ENCODE measurements at regions of chr11 and their contacts with region 1.

Region 1: GRCh38 chr11:18526521-18527296 is at the start of gene TSG101:
- DNase-seq: peak; percentile 96 to 97
- ATAC-seq: peak; percentile 98 to 99 (median 98)
- H3K4me3 ChIP-seq: peak within 1 kb of the TSS; percentile 96
- H3K27ac ChIP-seq: peak within 1 kb of the TSS; percentile 99
- H3K4me1 ChIP-seq: peaks cover 27% of the 10 kb centered on the region
- H3K27me3 ChIP-seq: no peaks in the 10 kb centered on the region
- CTCF ChIP-seq: no peak
- total RNA-seq, gene TSG101: 66.5 to 105 (median 76.6) TPM

Region 2: GRCh38 chr11:16839821-16840220 is 1686.9 kb before region 1 on chr11:
- intact Hi-C with region 1: loop called in 1 of 2 experiments (anchors 5 kb)
- DNase-seq: no peak
- ATAC-seq: no peak
- H3K4me3 ChIP-seq: no peak overlapping the region
- H3K27ac ChIP-seq: no peak overlapping the region
- H3K4me1 ChIP-seq: no peaks in the 10 kb centered on the region
- H3K27me3 ChIP-seq: no peaks in the 10 kb centered on the region
- CTCF ChIP-seq: no peak

Region 3: DNA sequence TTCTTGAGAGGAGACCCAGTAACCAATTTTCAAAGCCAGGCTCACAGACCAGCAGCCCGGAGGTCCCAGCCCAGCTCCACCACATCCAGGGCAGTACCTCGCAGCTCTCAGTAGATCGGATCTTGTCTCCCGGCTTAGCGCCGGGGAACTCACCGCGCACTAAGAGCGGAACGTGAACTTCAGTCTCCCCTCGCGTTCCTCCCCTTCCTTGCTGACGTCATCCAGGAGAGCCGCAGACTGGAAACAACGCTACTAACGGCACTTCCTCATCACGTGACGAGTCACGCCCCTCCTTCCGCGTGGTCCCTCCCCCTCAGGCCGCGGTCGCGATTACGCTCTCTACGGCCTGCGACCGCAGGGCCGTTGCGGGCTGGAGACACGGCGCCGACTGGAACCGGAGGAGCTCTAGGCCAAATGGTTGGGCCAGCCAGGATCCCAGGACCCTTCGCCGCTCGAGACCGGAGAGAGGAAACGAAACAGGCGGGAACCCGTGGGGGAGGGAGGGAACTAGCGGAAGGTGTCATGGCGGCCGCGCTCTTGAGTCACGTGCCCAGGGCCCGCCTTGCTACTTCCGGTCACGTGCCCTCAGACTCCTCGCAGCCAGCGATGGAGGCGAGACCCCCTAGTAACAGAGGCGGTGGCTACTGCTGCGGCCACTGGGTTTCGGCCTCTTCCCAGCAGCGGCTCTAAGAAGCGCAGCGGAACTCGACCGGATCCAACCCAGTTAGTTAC is 204.6 kb before region 1 on chr11 and contains the starts of genes GTF2H1 and HPS5:
- intact Hi-C with region 1: loop called in 1 of 2 experiments (anchors 10 kb)
- DNase-seq: peak; percentile 94 to 97
- ATAC-seq: peak; percentile 98 to 99 (median 99)
- H3K4me3 ChIP-seq: peak within 1 kb of the TSS; percentile 83
- H3K27ac ChIP-seq: peak within 1 kb of the TSS; percentile 95
- H3K4me1 ChIP-seq: peaks cover 34% of the 10 kb centered on the region
- H3K27me3 ChIP-seq: no peaks in the 10 kb centered on the region
- CTCF ChIP-seq: no peak
- total RNA-seq, gene GTF2H1: 14.5 to 25.2 (median 19.4) TPM
- total RNA-seq, gene HPS5: 7.0 to 11.9 (median 8.8) TPM

Region 4: DNA sequence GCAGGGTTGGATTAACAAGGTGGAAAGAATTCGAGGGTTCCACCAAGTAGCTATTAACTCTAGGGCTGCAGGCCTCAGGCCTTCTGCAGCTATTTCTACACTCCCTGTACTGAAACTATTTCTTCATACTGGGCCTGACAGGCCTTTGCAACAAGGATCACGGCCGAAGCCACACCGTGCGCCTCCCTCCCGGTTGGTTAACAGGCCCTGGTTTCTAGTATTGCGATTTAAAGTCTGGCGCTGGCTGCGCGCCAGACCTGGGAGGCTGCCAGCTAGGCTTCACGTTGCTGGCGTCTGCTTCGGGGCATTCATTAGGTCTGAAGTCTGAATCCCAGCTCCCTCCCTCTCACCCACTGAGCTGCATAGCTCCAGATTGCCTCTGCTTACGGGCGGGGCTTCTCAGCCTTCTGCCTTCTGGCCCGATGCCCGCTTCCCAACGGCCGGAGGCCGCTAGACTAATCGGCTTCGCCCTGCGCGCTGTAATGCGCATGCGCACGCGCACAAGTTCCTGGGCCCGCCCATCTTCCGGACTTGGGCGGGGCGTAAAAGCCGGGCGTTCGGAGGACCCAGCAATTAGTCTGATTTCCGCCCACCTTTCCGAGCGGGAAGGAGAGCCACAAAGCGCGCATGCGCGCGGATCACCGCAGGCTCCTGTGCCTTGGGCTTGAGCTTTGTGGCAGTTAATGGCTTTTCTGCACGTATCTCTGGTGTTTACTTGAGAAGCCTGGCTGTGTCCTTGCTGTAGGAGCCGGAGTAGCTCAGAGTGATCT is 130.8 kb before region 1 on chr11:
- intact Hi-C with region 1: loop called in 1 of 2 experiments (anchors 5 kb)
- DNase-seq: peak; percentile 97 to 100
- ATAC-seq: peak; percentile 81 to 87 (median 83)
- H3K4me3 ChIP-seq: peak overlapping the region; percentile 79
- H3K27ac ChIP-seq: peak overlapping the region; percentile 98
- H3K4me1 ChIP-seq: peaks cover 25% of the 10 kb centered on the region
- H3K27me3 ChIP-seq: no peaks in the 10 kb centered on the region
- CTCF ChIP-seq: no peak

Region 5: DNA sequence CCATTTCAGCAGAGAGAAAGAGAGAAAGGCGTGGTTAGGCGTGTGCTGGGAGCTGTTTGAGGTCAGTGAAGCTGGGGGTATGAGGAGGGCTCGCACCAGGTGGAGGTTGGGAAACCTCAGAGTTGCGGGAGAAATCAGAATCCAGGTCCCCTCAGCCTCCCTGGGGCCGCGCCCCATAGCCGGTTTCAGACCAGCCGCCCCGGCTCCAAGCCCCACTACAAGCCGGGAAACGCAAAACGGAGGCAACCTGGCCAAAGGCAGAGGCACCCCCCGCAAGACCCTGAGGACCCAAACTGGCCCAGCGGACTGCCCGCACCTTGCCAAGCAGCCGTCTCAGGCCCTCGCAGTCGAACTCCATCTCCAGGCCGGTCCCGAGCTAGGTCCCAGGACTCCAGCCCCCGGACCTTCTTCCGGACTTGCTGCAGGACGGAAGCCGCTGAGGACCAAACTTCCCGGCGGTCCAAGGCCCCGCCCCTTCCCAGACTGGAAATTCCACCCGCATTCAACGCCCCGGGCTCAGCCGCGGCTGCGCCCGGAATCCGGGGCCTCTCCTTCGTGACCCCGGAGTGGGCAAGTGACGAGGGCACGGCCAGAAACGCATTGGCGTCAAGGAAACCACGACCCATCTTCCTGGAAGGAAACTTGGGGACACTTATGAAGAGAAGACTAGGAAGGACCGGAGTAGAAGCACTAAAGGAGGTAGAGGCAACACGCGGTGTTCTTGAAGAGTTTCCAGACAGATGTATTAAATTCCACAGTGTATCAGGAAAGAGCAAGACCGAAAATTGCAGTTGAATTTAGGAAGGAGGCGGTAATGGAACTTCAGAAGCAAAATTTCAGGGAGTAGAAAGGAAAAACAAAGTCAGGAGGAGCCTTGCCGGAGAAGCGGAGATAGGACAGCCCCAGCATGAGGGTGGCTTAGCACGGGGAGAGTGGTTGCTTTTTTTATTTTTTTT is 61.9 kb after region 1 on chr11 and contains the start of gene UEVLD:
- intact Hi-C with region 1: loop called in 1 of 2 experiments (anchors 2 kb)
- DNase-seq: peak; percentile 93 to 94
- ATAC-seq: peak; percentile 96 to 98 (median 98)
- H3K4me3 ChIP-seq: peak within 1 kb of the TSS; percentile 96
- H3K27ac ChIP-seq: peak within 1 kb of the TSS; percentile 85
- H3K4me1 ChIP-seq: peaks cover 35% of the 10 kb centered on the region
- H3K27me3 ChIP-seq: no peaks in the 10 kb centered on the region
- CTCF ChIP-seq: no peak
- total RNA-seq, gene UEVLD: 9.9 to 19.0 (median 14.2) TPM